ENCODE measurements at regions of chr4 and their contacts with region 1.

Region 1: DNA sequence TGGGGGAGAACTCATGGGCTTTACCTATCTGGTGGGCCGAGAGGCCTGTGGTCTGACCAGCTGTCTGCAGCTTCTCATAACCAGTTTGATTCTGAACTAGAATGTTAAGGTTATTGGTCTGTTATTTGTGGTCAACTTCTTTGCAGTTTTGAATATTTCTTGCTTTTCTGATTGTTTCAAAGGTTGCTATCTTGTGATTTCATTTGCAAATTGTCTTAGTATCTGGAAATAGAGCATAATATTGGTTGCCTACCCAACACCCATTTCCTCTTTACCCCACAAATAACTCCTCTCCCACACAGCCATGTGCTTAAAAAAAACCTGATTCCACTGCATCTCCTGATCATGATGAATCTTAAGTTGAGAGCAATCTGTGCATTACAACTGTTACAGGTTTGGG is 39.1 kb upstream of the BMP2K start:
- DNase-seq: no peak
- ATAC-seq: no peak
- H3K4me3 Mint-ChIP-seq: no peak overlapping the region
- H3K27ac Mint-ChIP-seq: peak overlapping the region; percentile 87
- H3K4me1 Mint-ChIP-seq: peaks cover 61% of the 10 kb centered on the region
- H3K27me3 Mint-ChIP-seq: no peaks in the 10 kb centered on the region
- CTCF ChIP-seq: no peak

Region 2: DNA sequence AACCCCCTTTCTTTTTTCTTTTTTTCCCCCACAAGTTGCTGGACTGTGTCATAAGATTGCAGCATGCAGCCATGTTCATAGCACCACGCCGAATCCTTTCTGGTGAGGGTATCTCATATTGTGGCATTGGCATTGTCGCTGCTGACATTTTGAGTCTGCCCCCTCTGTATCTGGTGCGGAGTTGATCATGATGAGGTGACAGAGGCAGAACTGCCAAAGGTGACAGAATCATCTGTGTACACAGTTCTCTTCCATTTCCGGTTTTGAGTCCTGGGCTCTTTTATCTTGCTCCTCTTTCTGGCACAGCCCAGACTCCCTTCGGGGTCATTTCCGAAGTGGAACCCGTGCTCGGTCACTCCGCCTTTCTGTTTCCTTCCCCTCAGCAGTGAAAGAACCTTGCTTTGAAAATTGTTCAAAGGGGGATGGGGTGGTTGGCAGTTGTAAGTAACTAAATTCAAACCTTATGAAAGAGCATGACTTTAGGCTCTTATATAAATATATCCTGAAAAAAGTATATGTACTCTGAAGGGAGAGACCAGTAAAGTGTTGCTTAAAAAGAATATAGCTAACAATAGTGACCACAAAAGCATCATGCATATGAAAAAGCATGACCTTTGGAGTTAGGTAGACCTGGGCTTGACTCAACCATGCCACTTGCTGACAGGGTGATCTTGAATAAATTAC is 15.9 kb before region 1 on chr4:
- CTCF ChIA-PET with region 1: no interaction called
- POLR2A ChIA-PET with region 1: no interaction called
- intact Hi-C with region 1: loop called (anchors 1 kb)
- DNase-seq: no peak
- ATAC-seq: peak; percentile 75
- H3K4me3 Mint-ChIP-seq: peak overlapping the region; percentile 78
- H3K27ac Mint-ChIP-seq: peak overlapping the region; percentile 89
- H3K4me1 Mint-ChIP-seq: peaks cover 40% of the 10 kb centered on the region
- H3K27me3 Mint-ChIP-seq: no peaks in the 10 kb centered on the region
- CTCF ChIP-seq: no peak

Region 3: DNA sequence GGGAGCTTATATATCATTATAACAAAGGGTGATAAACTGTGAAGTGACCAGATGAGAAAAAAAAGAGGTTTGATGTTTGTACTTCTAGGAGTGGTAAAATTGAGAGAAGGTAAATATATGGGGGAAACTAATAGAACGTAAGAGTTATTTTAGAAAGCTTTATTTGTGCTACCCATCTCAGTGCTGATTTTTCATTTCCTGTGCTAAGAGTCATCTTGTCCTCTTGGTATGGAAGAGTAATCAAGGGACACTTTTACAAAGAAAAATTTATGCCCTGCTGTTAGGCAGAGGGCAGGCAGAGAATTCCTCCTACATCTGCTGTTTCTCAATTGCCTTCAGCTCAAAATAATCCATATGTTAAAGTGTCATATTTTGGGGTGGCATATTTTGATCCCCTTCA is 10.5 kb before region 1 on chr4:
- CTCF ChIA-PET with region 1: no interaction called
- POLR2A ChIA-PET with region 1: interaction called, 5 read pairs
- intact Hi-C with region 1: loop called (anchors 1 kb)
- DNase-seq: no peak
- ATAC-seq: peak; percentile 61
- H3K4me3 Mint-ChIP-seq: no peak overlapping the region
- H3K27ac Mint-ChIP-seq: peak overlapping the region; percentile 56
- H3K4me1 Mint-ChIP-seq: peaks cover 37% of the 10 kb centered on the region
- H3K27me3 Mint-ChIP-seq: no peaks in the 10 kb centered on the region
- CTCF ChIP-seq: no peak

Region 4: GRCh38 chr4:78749972-78750727 is 13.1 kb after region 1 on chr4:
- CTCF ChIA-PET with region 1: interaction called, 9 read pairs
- POLR2A ChIA-PET with region 1: interaction called, 14 read pairs
- intact Hi-C with region 1: loop called (anchors 1 kb)
- DNase-seq: no peak
- ATAC-seq: peak; percentile 83
- H3K4me3 Mint-ChIP-seq: peak overlapping the region; percentile 74
- H3K27ac Mint-ChIP-seq: peak overlapping the region; percentile 93
- H3K4me1 Mint-ChIP-seq: peaks cover 72% of the 10 kb centered on the region
- H3K27me3 Mint-ChIP-seq: no peaks in the 10 kb centered on the region
- CTCF ChIP-seq: no peak

Region 5: DNA sequence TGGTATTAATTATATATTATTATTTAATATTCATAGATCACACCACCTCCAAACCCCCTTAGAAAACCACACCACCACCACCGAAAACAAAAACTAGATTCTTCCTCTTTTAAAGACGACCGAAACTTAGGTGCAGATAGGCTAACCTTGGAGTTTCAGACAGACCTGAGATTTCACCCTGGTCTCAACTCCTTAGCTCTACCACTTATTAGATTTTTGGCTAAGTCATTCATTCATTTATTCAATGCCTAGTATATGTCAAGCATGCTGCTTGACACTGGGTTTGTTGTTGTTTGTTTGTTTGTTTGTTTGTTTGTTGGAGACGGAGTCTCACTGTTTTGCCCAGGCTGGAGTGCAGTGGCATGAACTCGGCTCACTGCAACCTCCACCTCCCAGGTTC is 29.6 kb after region 1 on chr4:
- CTCF ChIA-PET with region 1: no interaction called
- POLR2A ChIA-PET with region 1: no interaction called
- intact Hi-C with region 1: loop called (anchors 2 kb)
- DNase-seq: no peak
- ATAC-seq: peak; percentile 94
- H3K4me3 Mint-ChIP-seq: peak overlapping the region; percentile 68
- H3K27ac Mint-ChIP-seq: peak overlapping the region; percentile 84
- H3K4me1 Mint-ChIP-seq: peaks cover 33% of the 10 kb centered on the region
- H3K27me3 Mint-ChIP-seq: no peaks in the 10 kb centered on the region
- CTCF ChIP-seq: no peak

Region 6: DNA sequence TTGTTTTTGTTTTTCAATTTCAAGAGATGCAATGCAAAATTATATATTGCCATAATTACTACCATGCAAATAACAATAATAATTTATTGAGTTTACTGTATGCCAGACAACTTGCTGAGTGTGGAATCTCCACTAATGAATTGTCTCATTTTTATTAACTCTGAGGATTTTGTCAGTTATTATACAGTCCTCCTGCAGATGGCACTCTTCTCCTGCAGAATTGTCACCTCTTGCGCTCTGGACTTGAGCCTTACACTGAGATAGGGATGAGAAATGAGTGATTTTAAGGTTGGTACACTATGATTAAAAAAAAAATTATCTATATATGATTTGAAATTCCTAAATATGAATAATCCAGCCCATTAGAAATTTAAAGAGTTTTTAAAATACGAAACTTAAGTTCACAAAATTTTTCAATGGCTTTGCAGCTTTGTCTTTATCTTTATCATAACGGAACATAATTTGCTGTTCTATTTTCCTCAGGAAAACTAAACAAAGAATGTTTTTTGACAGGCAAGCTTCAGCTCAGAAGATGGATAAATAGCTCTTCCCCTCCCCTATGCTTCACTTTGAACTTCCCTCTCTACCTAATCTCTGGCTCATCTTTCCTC is 214.9 kb after region 1 on chr4:
- CTCF ChIA-PET with region 1: no interaction called
- POLR2A ChIA-PET with region 1: no interaction called
- intact Hi-C with region 1: no loop called
- DNase-seq: no peak
- ATAC-seq: peak; percentile 68
- H3K4me3 Mint-ChIP-seq: no peak overlapping the region
- H3K27ac Mint-ChIP-seq: no peak overlapping the region
- H3K4me1 Mint-ChIP-seq: no peaks in the 10 kb centered on the region
- H3K27me3 Mint-ChIP-seq: peaks cover 7% of the 10 kb centered on the region
- CTCF ChIP-seq: no peak

Measured in activated B cell treated with CpG ODN at 0.5 μM for 24 hours (primary cell).